Thyroid gland (tissue), 4 donors: ENCODE measurements at regions of chr2 and their contacts with region 1.

Region 1: GRCh38 chr2:230160112-230160660 is 59.6 kb downstream of the SP110 start:
- DNase-seq: peak; percentile 10 to 31
- H3K4me3 ChIP-seq: no peak overlapping the region
- H3K27ac ChIP-seq: no peak overlapping the region
- H3K4me1 ChIP-seq: no peaks in the 10 kb centered on the region
- H3K27me3 ChIP-seq: no peaks in the 10 kb centered on the region
- CTCF ChIP-seq: peak; percentile 17 to 73 (median 61)
- POLR2A ChIP-seq: no peak

Region 2: DNA sequence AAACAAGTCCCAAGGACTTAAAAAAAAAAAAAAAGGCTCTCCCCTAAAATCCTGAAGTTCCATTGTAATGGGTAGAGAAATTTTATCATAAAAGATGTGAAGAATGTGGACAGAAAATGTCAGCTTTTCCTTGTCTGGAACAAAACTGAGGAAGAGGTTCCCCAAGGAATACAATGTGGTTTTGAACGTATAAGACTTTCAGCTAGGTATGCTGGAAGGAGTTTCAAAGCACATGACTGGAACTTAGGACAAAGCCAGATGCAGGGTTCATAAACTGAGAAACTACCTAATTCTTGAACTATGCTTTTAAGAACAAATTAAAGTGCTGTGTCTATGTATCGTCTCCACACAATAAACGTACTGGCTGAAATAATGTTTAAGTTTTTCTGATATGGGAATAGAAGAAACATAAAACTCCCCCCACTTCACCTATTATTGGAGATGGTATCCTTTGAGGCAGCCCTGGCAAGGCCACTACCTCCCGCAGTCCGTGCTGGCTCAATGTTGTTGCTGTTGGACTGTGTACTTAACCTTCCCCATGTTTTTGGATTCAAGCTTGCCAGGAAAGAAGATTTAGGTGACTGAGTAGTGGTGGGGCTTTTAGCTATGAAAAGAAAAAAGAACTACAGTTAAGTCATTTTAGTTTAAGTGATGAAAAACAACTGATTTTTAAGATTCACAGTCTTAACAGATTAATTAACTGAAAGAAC is 361.6 kb before region 1 on chr2:
- intact Hi-C with region 1: no loop called
- DNase-seq: peak; percentile 29 to 59
- H3K4me3 ChIP-seq: no peak overlapping the region
- H3K27ac ChIP-seq: peak overlapping the region in 2 of 3 donors; percentile 12 to 31
- H3K4me1 ChIP-seq: peaks cover 14 to 15% of the 10 kb centered on the region in 2 donors
- H3K27me3 ChIP-seq: no peaks in the 10 kb centered on the region
- CTCF ChIP-seq: no peak
- POLR2A ChIP-seq: no peak

Region 3: DNA sequence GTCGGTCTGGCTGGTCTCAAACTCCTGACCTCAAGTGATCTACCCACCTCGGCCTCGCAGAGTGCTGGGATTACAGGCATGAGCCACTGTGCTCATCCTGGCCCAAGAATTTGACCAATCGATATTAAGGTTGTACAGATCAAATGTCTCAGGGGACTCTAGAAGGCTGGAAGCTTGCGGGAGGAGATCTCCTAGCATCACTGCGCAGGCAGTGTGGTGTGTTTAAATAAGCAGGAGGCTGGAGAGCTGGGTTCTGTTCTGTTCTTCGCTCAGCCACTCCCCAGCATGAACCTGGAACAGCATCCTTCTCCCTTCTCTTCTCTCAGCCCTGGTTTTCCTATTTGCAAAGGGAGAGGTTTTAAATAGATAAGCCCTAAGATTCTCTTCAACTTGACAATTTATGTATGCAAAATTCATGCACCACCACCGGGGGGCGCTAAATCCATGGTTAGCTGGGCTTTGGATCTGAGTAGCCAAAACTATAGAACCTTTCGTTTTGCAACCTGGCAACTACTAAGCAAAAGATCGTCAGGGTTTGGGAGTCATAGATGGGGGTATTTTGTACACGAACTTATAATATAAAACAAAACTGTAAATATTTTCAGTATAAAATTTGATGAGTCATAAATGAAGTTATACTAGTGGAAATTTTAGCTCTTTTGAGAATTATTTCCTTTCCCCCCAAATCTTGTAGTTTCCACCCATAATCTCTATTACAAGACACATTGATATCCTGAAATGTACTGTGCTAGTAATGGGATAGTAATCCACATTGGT is 152.1 kb before region 1 on chr2:
- intact Hi-C with region 1: loop called (anchors 2 kb)
- DNase-seq: peak; percentile 48 to 78
- H3K4me3 ChIP-seq: no peak overlapping the region
- H3K27ac ChIP-seq: no peak overlapping the region
- H3K4me1 ChIP-seq: no peaks in the 10 kb centered on the region
- H3K27me3 ChIP-seq: no peaks in the 10 kb centered on the region
- CTCF ChIP-seq: peak; percentile 53 to 74 (median 66)
- POLR2A ChIP-seq: no peak

Region 4: GRCh38 chr2:230068016-230068650 is 92.1 kb before region 1 on chr2:
- intact Hi-C with region 1: loop called (anchors 5 kb)
- DNase-seq: peak; percentile 61 to 65
- H3K4me3 ChIP-seq: peak overlapping the region; percentile 56 to 69 (median 60)
- H3K27ac ChIP-seq: peak overlapping the region in 2 of 3 donors; percentile 61 to 75
- H3K4me1 ChIP-seq: no peaks in the 10 kb centered on the region
- H3K27me3 ChIP-seq: no peaks in the 10 kb centered on the region
- CTCF ChIP-seq: no peak
- POLR2A ChIP-seq: no peak